WTC11 (cell line): ENCODE measurements at regions of chr2 and their contacts with region 1.

Region 1: GRCh38 chr2:24075915-24076848 is at the start of gene SF3B6:
- DNase-seq: peak; percentile 100
- ATAC-seq: peak; percentile 87
- H3K4me3 Mint-ChIP-seq: peak within 1 kb of the TSS; percentile 96
- H3K27ac Mint-ChIP-seq: peak within 1 kb of the TSS; percentile 99
- H3K4me1 Mint-ChIP-seq: peaks cover 21% of the 10 kb centered on the region
- H3K27me3 Mint-ChIP-seq: no peaks in the 10 kb centered on the region
- CTCF ChIP-seq: no peak
- total RNA-seq, gene SF3B6: 117 to 128 TPM (median 126 TPM) in 3 replicates

Region 2: DNA sequence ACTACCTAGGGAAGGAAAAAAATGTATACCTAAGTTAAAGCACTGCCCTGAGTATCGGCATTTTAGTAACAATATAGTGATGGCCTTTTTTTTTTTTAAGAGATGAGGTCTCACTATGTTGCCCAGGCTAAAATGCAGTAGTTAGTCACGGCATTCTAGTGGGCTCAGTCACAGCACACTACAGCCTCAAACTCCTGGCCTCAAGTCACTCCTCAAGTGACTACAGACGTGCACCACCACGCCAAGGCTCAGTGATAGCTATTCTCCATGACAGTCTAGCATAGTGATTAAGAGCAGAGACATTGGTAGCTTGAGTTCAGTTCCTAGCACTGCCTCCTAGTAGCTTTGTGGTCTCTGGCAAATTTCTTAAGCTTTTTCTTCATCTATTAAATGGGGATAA is 108.3 kb before region 1 on chr2:
- CTCF ChIA-PET with region 1: no interaction called
- POLR2A ChIA-PET with region 1: no interaction called
- DNase-seq: no peak
- ATAC-seq: no peak
- H3K4me3 Mint-ChIP-seq: no peak overlapping the region
- H3K27ac Mint-ChIP-seq: no peak overlapping the region
- H3K4me1 Mint-ChIP-seq: no peaks in the 10 kb centered on the region
- H3K27me3 Mint-ChIP-seq: no peaks in the 10 kb centered on the region
- CTCF ChIP-seq: no peak

Region 3: DNA sequence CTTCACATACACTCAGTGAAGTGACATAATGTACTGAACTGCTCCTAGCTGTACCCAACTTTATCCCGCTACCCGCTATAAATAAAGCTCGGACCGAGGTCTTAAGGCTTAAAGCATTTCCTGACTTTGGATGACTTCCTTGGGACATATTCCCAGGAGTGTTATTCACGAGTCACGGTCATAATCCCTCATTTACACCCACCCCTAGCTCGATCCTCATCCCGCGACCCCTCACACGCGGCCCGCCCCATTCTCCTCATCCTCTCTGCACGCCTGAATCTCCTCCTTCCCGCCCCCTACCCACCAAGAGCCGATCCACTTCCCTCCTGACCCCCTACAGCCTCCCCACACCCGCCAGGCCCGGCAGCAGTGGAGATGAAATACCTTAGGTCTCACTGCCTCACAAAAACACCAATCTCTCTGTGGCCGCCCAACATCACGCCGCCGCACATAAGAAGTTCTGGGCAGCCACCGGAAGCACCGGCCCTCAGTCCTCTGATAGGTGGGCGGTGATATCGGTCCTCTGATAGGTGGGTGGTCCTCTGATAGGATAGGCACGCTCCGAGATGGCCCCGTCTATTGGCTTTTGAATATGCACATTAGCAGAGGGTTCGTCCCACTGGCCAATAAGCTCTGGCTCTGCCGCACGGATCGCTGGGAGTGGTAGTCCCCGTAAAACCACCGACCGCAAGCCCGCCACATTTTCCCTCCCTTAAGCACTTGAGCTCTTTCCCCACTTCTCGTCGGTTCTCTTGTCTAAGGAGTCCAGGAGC is 29.1 kb before region 1 on chr2 and contains the start of gene WDCP:
- CTCF ChIA-PET with region 1: interaction called, 6 read pairs
- POLR2A ChIA-PET with region 1: interaction called, 29 read pairs
- DNase-seq: peak; percentile 94
- ATAC-seq: peak; percentile 93
- H3K4me3 Mint-ChIP-seq: peak within 1 kb of the TSS; percentile 97
- H3K27ac Mint-ChIP-seq: peak within 1 kb of the TSS; percentile 92
- H3K4me1 Mint-ChIP-seq: peaks cover 26% of the 10 kb centered on the region
- H3K27me3 Mint-ChIP-seq: no peaks in the 10 kb centered on the region
- CTCF ChIP-seq: no peak
- total RNA-seq, gene WDCP: 30.5 to 33.6 TPM (median 31.9 TPM) in 3 replicates